GM12878 (cell line): ENCODE measurements at regions of chr10 and their contacts with region 1.

Region 1: DNA sequence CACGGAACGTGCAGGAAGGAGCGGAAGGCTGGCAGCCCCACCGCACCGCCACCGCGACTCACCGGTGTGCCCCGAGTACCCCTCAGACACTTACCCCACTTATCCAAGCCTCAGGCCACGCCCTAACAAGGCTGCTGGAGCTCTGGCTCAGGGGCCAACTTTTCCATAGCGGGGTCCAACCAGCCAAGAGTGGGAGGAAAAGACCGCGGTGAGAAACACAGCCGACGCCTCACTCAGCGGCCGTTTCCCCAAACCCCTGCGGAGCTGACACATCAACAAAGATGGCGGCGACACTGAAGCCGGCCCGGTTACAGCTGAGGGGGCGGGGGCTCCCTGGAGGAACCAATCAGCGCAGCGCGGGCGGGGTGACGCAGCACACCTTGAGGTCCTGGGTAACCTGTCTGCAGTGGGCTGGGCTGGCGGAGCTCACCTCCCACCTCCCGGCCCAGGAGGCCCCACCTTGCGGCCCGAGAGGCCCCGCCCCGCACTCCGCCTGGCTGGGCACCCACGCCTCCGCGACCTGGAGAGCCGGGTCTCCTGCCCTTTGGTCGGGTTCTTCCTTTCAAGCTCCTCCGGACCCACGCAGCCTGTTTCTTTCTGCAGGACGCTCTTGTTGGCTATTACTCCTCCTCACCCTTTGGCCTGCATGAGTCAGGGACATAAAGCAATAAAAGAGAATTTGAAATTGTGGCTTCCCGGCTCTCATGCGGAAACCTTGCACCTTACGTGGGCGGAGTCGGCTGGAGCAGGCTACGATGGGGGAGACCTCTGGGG is at the start of gene CCDC186:
- DNase-seq: peak; percentile 79
- ATAC-seq: peak; percentile 98
- H3K4me3 ChIP-seq: peak within 1 kb of the TSS; percentile 91
- H3K27ac ChIP-seq: peak within 1 kb of the TSS; percentile 82
- H3K4me1 ChIP-seq: peaks cover 4% of the 10 kb centered on the region
- H3K27me3 ChIP-seq: no peaks in the 10 kb centered on the region
- CTCF ChIP-seq: no peak
- EP300 ChIP-seq: no peak
- POLR2A ChIP-seq: peak; percentile 96
- RAD21 ChIP-seq: no peak
- polyA plus RNA-seq, gene CCDC186: 3.5 to 5.4 TPM

Region 2: DNA sequence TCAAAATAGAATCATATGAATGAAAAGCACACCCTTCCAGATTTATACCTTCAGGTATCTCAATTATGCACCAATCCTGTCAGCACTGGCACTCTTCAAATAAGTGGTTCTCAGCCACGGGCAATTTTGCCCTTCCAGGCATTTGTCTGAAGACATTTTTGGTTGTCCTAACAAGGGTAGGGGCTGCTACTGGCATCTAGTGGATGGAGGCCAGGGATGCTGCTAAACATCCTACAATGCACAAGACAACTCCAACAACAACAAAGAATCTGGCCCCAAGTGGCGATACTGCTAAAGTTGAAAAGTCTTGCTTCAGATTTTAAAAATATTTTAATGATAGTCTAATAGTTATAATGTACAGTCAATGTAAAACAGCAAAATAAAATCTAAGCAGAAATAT is 16.2 kb before region 1 on chr10:
- CTCF ChIA-PET with region 1: interaction called, 10 read pairs
- POLR2A ChIA-PET with region 1: interaction called, 3 read pairs
- RAD21 ChIA-PET with region 1: no interaction called
- SMC1A ChIA-PET with region 1: interaction called, 5 read pairs
- in situ Hi-C with region 1: no loop called
- intact Hi-C with region 1: no loop called
- DNase-seq: no peak
- ATAC-seq: no peak
- H3K4me3 ChIP-seq: no peak overlapping the region
- H3K27ac ChIP-seq: no peak overlapping the region
- H3K4me1 ChIP-seq: no peaks in the 10 kb centered on the region; the same call in 1 of the 2 replicates
- H3K27me3 ChIP-seq: no peaks in the 10 kb centered on the region
- CTCF ChIP-seq: no peak
- EP300 ChIP-seq: no peak
- POLR2A ChIP-seq: no peak
- RAD21 ChIP-seq: no peak

Region 3: GRCh38 chr10:114437456-114438292 is 263.6 kb after region 1 on chr10:
- CTCF ChIA-PET with region 1: no interaction called
- POLR2A ChIA-PET with region 1: no interaction called
- RAD21 ChIA-PET with region 1: no interaction called
- SMC1A ChIA-PET with region 1: no interaction called
- in situ Hi-C with region 1: loop called (anchors 25 kb)
- intact Hi-C with region 1: no loop called
- DNase-seq: no peak
- ATAC-seq: peak; percentile 56
- H3K4me3 ChIP-seq: no peak overlapping the region
- H3K27ac ChIP-seq: no peak overlapping the region
- H3K4me1 ChIP-seq: no peaks in the 10 kb centered on the region
- H3K27me3 ChIP-seq: no peaks in the 10 kb centered on the region; a peak in 1 of 4 replicates
- CTCF ChIP-seq: peak; percentile 41 to 51 (median 44)
- EP300 ChIP-seq: no peak
- POLR2A ChIP-seq: no peak
- RAD21 ChIP-seq: peak; percentile 49; the same call in 1 of the 2 replicates